Endothelial cell of umbilical vein (primary cell): ENCODE measurements at regions of chr4 and their contacts with region 1.

Region 1: GRCh38 chr4:110540982-110541440 is 65.1 kb downstream of the ENPEP start:
- DNase-seq: peak; percentile 94
- H3K4me3 ChIP-seq: peak overlapping the region in 1 of 3 experiments; percentile 23
- H3K27ac ChIP-seq: peak overlapping the region; percentile 99
- H3K4me1 ChIP-seq: peaks cover 25% of the 10 kb centered on the region
- H3K27me3 ChIP-seq: no peaks in the 10 kb centered on the region
- CTCF ChIP-seq: no peak
- POLR2A ChIP-seq: no peak

Region 2: GRCh38 chr4:110196206-110196870 is 344.7 kb before region 1 on chr4:
- CTCF ChIA-PET with region 1: no interaction called
- POLR2A ChIA-PET with region 1: no interaction called
- dilution Hi-C with region 1: no loop called
- intact Hi-C with region 1: loop called (anchors 5 kb)
- DNase-seq: peak; percentile 55
- H3K4me3 ChIP-seq: peak overlapping the region; percentile 78 to 95 (median 91)
- H3K27ac ChIP-seq: peak overlapping the region; percentile 46
- H3K4me1 ChIP-seq: peaks cover 23% of the 10 kb centered on the region
- H3K27me3 ChIP-seq: no peaks in the 10 kb centered on the region
- CTCF ChIP-seq: no peak
- POLR2A ChIP-seq: peak; percentile 20

Region 3: GRCh38 chr4:111678479-111678878 is 1137.5 kb after region 1 on chr4:
- CTCF ChIA-PET with region 1: no interaction called
- POLR2A ChIA-PET with region 1: no interaction called
- dilution Hi-C with region 1: no loop called
- intact Hi-C with region 1: loop called (anchors 5 kb)
- DNase-seq: peak; percentile 84
- H3K4me3 ChIP-seq: no peak overlapping the region
- H3K27ac ChIP-seq: peak overlapping the region; percentile 79
- H3K4me1 ChIP-seq: peaks cover 20% of the 10 kb centered on the region
- H3K27me3 ChIP-seq: no peaks in the 10 kb centered on the region
- CTCF ChIP-seq: no peak
- POLR2A ChIP-seq: no peak